Activated CD8-positive, alpha-beta memory T cell treated with anti-CD3 and anti-CD28 coated beads, Interleukin-2, amount 10 ng/mL, durations not matched to agents 7 days and 5 days (primary cell): ENCODE measurements at regions of chr5 and their contacts with region 1.

Region 1: DNA sequence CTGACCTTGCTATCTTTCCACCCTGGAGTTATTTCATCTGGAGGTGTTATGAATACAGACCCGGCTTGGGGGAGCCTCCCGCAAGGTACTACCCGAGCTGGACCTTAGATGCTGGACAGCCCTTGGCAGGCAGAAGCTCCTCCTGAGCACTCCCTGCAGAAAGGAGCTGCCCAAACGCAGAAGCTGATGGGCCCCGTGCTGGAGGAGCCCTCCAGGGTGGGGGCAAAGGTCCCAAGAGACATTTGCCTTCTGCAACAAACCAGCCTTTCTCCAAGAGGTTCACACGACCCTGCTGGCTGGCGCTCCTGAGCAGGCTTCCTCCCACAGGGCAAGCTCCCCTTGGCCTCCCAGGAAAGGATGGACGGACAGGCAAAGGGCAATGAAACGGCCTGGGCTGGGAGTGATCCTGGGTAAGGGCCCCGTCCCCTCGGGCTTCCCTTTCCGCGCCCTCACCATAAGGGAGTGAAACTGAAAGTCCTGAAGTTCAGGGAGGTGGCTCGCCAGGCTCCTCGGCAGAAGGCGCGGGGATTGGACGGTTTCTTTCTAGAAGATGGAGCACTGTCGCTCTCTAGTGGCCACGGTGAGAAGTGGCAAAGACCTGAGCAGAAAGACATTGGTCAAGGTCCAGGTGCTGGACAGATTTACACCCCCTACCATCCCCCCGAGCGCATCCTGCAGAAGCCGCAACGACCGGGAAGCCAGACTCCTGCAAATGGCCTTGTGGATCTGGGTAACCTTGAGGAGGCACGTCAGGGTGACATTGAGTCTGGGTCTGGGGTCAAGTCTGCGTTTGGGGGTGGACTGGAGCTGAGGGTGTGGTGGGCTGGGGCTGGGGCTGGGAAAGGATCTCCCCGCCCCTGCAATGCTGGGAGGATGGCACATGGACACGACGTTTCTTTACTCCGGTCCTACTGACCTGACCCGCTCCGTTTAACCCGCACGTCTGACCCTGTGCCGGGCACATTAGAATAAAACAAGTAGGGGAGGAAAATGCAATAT is 56.4 kb downstream of the NEURL1B start:
- DNase-seq: peak; percentile 92
- ATAC-seq: peak; percentile 98
- H3K4me3 Mint-ChIP-seq: peak overlapping the region; percentile 87
- H3K27ac Mint-ChIP-seq: peak overlapping the region; percentile 90
- H3K4me1 Mint-ChIP-seq: peaks cover 22% of the 10 kb centered on the region
- H3K27me3 Mint-ChIP-seq: peaks cover 28% of the 10 kb centered on the region

Region 2: DNA sequence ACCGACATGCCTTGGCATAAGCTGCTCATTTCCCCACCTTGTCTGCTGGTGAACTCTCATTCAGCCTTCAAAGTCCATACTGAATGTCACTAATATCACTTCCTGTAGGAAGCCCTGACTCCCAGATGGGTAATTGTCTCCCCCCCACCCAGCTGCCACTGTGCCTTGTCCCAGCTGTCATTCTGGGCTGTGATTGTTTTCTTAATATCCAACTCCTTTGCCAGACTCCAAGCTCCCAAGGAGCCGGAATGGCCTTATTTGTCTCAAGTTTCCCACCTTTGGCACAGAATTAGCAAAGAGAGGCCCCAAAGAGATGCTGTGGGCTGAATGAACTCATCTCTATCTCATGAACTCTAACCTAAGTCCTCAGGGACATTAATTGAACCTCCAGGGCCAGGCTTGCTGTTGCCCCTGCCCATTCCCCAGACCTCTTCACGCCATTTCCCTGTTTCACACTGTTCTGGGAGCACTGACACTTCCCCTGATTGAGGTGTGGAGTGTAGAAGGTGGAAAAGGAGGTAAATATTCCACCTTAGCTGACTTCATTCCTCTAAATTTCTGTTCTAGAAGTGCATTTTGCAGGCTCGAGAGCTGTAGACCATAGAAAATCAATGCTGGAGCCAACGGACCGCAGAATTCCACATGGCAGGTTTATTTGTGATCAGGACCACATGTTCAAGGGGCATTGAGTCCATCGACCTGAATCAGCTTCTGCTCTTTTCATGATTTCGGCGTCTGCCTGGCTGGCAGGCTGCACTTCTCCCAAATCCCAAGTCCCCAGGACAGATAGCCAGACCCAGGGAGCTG is 238.2 kb before region 1 on chr5:
- CTCF ChIA-PET with region 1: interaction called, 12 read pairs
- DNase-seq: no peak
- ATAC-seq: no peak
- H3K4me3 Mint-ChIP-seq: no peak overlapping the region
- H3K27ac Mint-ChIP-seq: no peak overlapping the region
- H3K4me1 Mint-ChIP-seq: peaks cover 10% of the 10 kb centered on the region
- H3K27me3 Mint-ChIP-seq: peaks cover 36% of the 10 kb centered on the region

Region 3: GRCh38 chr5:172479044-172479783 is 218.2 kb before region 1 on chr5:
- CTCF ChIA-PET with region 1: interaction called, 54 read pairs
- DNase-seq: peak; percentile 76
- ATAC-seq: peak; percentile 96
- H3K4me3 Mint-ChIP-seq: no peak overlapping the region
- H3K27ac Mint-ChIP-seq: no peak overlapping the region
- H3K4me1 Mint-ChIP-seq: no peaks in the 10 kb centered on the region
- H3K27me3 Mint-ChIP-seq: peaks cover 8% of the 10 kb centered on the region

Region 4: DNA sequence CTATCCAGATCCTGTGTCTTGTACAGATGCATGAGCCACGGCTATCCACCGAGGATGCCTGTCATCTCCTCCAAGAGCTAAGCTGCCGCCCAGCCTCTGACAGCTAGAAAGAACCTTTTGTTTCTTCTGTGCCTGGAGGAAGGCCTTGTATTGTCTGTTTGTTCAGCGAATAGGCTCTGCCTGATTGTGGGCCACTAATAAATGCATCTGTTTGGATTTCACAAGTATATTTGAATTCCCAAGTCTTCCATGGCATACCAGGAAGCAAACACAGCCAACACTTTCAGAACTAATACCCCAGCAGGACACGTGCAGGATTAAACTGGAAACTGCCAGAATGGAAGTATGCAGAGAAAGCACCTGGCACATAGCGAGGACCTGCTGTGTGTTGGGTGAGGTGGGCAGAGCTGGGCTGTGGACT is 149.1 kb before region 1 on chr5:
- CTCF ChIA-PET with region 1: no interaction called
- DNase-seq: no peak
- ATAC-seq: no peak
- H3K4me3 Mint-ChIP-seq: no peak overlapping the region
- H3K27ac Mint-ChIP-seq: no peak overlapping the region
- H3K4me1 Mint-ChIP-seq: no peaks in the 10 kb centered on the region
- H3K27me3 Mint-ChIP-seq: peaks cover 2% of the 10 kb centered on the region

Region 5: DNA sequence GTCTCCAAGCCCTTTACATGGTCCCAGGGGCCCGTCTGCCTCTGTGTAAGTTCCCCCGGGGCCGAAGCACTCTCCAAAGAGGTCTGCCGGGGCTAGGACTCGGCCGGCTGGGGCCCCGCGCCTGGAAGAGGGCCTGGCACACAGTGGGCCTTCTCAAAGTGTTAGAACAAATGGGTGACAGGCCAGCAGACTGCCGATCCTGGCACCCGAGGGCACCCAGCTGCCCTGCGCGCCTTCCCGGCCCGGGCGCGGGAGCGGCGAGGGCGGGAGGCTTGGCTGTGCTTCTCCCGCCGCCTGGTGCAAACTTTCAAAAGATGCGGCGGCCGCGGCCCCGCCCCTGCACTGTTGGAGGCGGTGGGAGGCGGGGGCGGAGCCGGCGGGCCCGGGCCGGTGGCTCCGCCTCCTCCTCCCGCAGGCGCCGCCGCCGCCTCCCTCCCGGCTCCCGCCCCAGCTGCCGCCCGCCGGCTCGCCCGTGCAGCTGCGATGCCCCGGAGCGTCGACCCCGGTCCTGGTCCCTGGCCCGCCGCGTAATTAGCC is 56.5 kb before region 1 on chr5 and contains the start of gene NEURL1B:
- CTCF ChIA-PET with region 1: no interaction called
- DNase-seq: peak; percentile 69
- ATAC-seq: peak; percentile 92
- H3K4me3 Mint-ChIP-seq: peak within 1 kb of the TSS; percentile 26
- H3K27ac Mint-ChIP-seq: no peak within 1 kb of the TSS
- H3K4me1 Mint-ChIP-seq: peaks cover 4% of the 10 kb centered on the region
- H3K27me3 Mint-ChIP-seq: peaks cover 54% of the 10 kb centered on the region
- total RNA-seq, gene NEURL1B: 0.26 to 1.7 TPM

Region 6: DNA sequence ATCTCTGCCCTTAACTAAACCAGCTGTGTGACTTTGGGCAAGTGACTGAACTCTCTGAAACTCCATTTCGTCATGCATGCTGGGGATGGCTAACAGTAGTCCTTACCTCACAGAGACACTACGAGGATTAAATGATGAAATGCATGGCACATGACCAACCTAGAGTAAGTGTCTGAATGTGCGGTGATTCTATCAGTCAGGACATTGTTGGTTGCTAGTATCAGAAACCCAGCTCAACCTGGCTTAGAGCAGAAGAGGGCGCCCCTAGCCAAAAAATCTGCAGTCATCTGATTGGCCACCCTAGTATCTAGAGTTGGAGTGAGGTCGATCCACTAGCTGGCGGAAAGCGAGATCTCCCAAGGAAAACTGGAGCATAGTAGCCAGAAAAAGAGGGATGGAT is 31.2 kb before region 1 on chr5:
- CTCF ChIA-PET with region 1: interaction called, 16 read pairs
- DNase-seq: no peak
- ATAC-seq: no peak
- H3K4me3 Mint-ChIP-seq: no peak overlapping the region
- H3K27ac Mint-ChIP-seq: no peak overlapping the region
- H3K4me1 Mint-ChIP-seq: no peaks in the 10 kb centered on the region
- H3K27me3 Mint-ChIP-seq: no peaks in the 10 kb centered on the region

Region 7: DNA sequence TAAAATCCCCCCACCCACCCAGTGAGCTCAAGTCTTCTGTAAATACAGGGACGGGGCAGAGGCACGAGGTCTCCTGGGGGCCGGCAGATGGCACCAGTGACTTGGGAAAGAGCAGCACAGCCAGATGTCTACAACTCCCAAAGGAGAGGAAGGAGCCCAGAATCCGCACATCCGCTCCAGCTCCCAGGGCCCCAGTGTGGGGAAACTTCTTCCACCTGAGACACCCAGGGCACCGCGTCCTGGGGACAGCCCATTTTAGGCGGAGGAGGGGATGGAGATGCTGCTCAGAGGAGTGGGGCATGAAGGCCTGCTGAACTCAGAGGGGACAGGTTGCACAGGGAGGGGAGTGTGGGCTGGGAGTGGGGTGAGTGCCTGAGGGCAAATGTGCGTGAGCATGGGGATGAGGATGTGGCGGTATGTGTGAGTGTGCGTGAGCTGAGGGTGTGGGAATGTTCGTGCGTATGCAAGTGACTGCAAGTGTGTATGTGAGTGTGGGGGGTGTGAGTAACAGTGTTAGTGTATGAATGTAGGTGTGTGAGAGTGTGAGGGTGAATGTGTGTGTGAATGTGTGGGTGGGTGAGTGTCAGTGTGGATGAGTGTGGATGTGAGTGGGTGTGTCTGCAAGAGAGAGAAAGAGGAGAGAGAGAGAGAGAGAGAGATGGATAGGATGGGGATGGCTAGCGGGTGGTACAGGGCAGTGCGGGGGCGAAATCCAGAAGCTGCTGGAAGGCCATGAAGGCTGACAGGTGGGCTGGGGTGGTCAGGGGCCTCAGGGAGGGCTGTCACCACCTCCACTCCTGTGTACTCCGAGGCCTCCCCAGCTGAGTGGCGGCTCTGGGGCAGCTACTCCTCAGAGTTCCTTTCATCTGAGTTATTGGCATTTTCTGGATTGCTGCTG is 10.1 kb after region 1 on chr5:
- CTCF ChIA-PET with region 1: interaction called, 15 read pairs
- DNase-seq: no peak
- ATAC-seq: peak; percentile 30
- H3K4me3 Mint-ChIP-seq: no peak overlapping the region
- H3K27ac Mint-ChIP-seq: no peak overlapping the region
- H3K4me1 Mint-ChIP-seq: no peaks in the 10 kb centered on the region
- H3K27me3 Mint-ChIP-seq: peaks cover 28% of the 10 kb centered on the region

Region 8: GRCh38 chr5:172714491-172715421 is 17.3 kb after region 1 on chr5:
- CTCF ChIA-PET with region 1: interaction called, 15 read pairs
- DNase-seq: peak; percentile 75
- ATAC-seq: peak; percentile 87
- H3K4me3 Mint-ChIP-seq: no peak overlapping the region
- H3K27ac Mint-ChIP-seq: no peak overlapping the region
- H3K4me1 Mint-ChIP-seq: no peaks in the 10 kb centered on the region
- H3K27me3 Mint-ChIP-seq: peaks cover 4% of the 10 kb centered on the region